Psoas muscle (tissue), 8 donors: ENCODE measurements at regions of chr1 and their contacts with region 1.

Region 1: GRCh38 chr1:56255516-56256152 is 323.7 kb downstream of the PLPP3 start:
- DNase-seq: peak; percentile 88 to 93
- ATAC-seq: peak; percentile 54 to 89 (median 86)
- H3K4me3 ChIP-seq: no peak overlapping the region
- H3K27ac ChIP-seq: peak overlapping the region; percentile 60
- H3K4me1 ChIP-seq: peaks cover 42% of the 10 kb centered on the region
- H3K27me3 ChIP-seq: no peaks in the 10 kb centered on the region
- CTCF ChIP-seq: no peak

Region 2: GRCh38 chr1:55868026-55868425 is 387.6 kb before region 1 on chr1:
- intact Hi-C with region 1: loop called in 1 of 2 experiments (anchors 10 kb)
- DNase-seq: no peak
- ATAC-seq: peak in 1 of 4 donors; percentile 55
- H3K4me3 ChIP-seq: no peak overlapping the region
- H3K27ac ChIP-seq: no peak overlapping the region
- H3K4me1 ChIP-seq: peaks cover 24% of the 10 kb centered on the region
- H3K27me3 ChIP-seq: no peaks in the 10 kb centered on the region
- CTCF ChIP-seq: peak; percentile 20

Region 3: GRCh38 chr1:56200442-56200841 is 55.2 kb before region 1 on chr1:
- intact Hi-C with region 1: loop called in 1 of 2 experiments (anchors 5 kb)
- DNase-seq: peak in 1 of 2 donors; percentile 24
- ATAC-seq: peak; percentile 77 to 85 (median 83)
- H3K4me3 ChIP-seq: peak overlapping the region; percentile 2
- H3K27ac ChIP-seq: peak overlapping the region; percentile 73
- H3K4me1 ChIP-seq: peaks cover 49% of the 10 kb centered on the region
- H3K27me3 ChIP-seq: no peaks in the 10 kb centered on the region
- CTCF ChIP-seq: no peak

Region 4: GRCh38 chr1:56376188-56376984 is 120.8 kb after region 1 on chr1:
- intact Hi-C with region 1: loop called in 1 of 2 experiments (anchors 5 kb)
- DNase-seq: peak; percentile 71 to 76
- ATAC-seq: peak; percentile 80 to 88 (median 83)
- H3K4me3 ChIP-seq: peak overlapping the region; percentile 50
- H3K27ac ChIP-seq: peak overlapping the region; percentile 86
- H3K4me1 ChIP-seq: peaks cover 49% of the 10 kb centered on the region
- H3K27me3 ChIP-seq: no peaks in the 10 kb centered on the region
- CTCF ChIP-seq: no peak